ENCODE measurements at regions of chr5 and their contacts with region 1.

Region 1: DNA sequence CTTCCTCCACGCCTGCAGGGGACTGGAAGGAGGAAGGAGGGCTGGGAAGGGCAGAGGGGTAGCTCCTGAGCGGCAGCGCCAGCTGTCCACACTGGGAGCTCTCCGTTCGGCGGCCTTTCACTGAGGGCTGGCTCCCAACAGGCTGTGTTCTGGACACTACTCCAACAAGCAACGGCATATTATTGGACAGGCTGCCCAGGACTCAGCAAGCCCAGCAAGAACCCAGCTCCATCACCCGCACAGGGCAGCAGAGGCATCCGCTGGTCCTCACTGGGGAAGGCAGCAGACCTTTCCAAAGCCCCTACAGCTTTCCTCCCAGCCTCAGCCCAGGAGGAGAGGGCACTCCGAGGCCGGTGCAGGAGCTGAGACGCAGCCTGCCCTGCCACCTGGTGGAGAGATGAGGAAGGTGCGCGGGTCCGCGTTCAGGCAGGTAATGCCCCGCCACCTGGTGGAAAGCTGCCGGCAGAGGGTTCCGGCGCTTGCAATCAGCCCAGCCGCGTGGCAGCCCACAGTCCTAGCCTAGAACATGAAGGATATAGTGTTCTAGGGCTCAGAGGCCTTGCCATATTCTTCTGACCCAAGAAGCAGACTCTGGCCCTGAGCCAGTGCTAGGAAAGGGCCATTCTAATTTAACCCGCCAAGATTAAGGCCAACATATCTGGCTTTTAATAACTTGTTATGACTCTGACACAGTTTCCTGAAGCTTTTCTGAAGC is 74.4 kb downstream of the NRG2 start:
- DNase-seq: peak; percentile 97
- ATAC-seq: peak; percentile 98
- H3K4me3 Mint-ChIP-seq: no peak overlapping the region
- H3K27ac Mint-ChIP-seq: no peak overlapping the region
- H3K4me1 Mint-ChIP-seq: no peaks in the 10 kb centered on the region
- H3K27me3 Mint-ChIP-seq: peaks cover 15% of the 10 kb centered on the region
- CTCF ChIP-seq: peak; percentile 98

Region 2: DNA sequence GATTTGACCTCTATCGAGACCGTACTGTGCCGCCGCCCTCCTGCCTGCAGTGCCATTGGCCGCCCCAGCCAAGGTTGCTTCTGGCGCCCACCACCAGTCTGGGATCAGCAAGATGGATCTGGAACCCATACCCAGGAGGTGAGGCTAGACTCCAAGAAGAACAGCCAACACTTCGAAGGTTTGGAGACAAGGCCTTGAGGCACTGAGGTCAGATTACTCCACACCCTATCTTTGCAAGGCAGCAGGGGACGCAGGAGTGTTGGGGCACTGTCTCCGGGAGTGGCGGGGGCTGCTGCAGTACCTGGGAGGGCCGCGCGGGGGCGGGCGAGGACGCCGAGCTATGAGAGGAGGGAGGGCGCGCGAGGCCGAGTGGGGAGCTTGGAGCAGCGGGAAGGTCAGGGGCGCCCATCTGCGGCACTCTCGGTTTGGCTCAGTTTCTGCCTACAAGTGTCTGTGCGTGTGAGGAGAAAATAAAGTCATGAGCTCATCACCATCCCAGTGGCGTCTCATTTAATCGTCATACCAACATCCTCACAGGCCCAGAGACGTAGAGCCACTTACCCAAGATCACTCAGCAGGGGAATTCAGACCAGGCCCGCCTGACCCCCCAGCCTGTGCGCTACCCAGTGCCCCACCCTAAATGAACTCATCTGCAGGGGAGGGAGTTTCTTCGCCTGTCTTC is 193.6 kb before region 1 on chr5:
- CTCF ChIA-PET with region 1: interaction called, 61 read pairs
- POLR2A ChIA-PET with region 1: no interaction called
- DNase-seq: peak; percentile 97
- ATAC-seq: peak; percentile 97
- H3K4me3 Mint-ChIP-seq: peak overlapping the region; percentile 34; the same call in 1 of the 2 replicates
- H3K27ac Mint-ChIP-seq: no peak overlapping the region
- H3K4me1 Mint-ChIP-seq: peaks cover 11% of the 10 kb centered on the region; the same call in 1 of the 2 replicates
- H3K27me3 Mint-ChIP-seq: peaks cover 28% of the 10 kb centered on the region
- CTCF ChIP-seq: peak; percentile 98

Region 3: GRCh38 chr5:139837631-139838422 is 130.9 kb before region 1 on chr5:
- CTCF ChIA-PET with region 1: interaction called, 55 read pairs
- POLR2A ChIA-PET with region 1: no interaction called
- DNase-seq: no peak
- ATAC-seq: no peak
- H3K4me3 Mint-ChIP-seq: no peak overlapping the region
- H3K27ac Mint-ChIP-seq: no peak overlapping the region
- H3K4me1 Mint-ChIP-seq: no peaks in the 10 kb centered on the region
- H3K27me3 Mint-ChIP-seq: peaks cover 17% of the 10 kb centered on the region
- CTCF ChIP-seq: no peak

Region 4: GRCh38 chr5:139872052-139872766 is 96.5 kb before region 1 on chr5:
- CTCF ChIA-PET with region 1: interaction called, 113 read pairs
- POLR2A ChIA-PET with region 1: interaction called, 4 read pairs
- DNase-seq: peak; percentile 45
- ATAC-seq: peak; percentile 73
- H3K4me3 Mint-ChIP-seq: no peak overlapping the region
- H3K27ac Mint-ChIP-seq: no peak overlapping the region
- H3K4me1 Mint-ChIP-seq: peaks cover 19% of the 10 kb centered on the region
- H3K27me3 Mint-ChIP-seq: no peaks in the 10 kb centered on the region; the same call in 1 of the 2 replicates
- CTCF ChIP-seq: 0 out of 2 replicates have a peak, but pooled peaks have one; percentile 24

Region 5: GRCh38 chr5:139903795-139904565 is 64.7 kb before region 1 on chr5:
- CTCF ChIA-PET with region 1: interaction called, 83 read pairs
- POLR2A ChIA-PET with region 1: no interaction called
- DNase-seq: peak; percentile 67
- ATAC-seq: peak; percentile 50
- H3K4me3 Mint-ChIP-seq: peak overlapping the region; percentile 71
- H3K27ac Mint-ChIP-seq: no peak overlapping the region
- H3K4me1 Mint-ChIP-seq: peaks cover 12% of the 10 kb centered on the region
- H3K27me3 Mint-ChIP-seq: peaks cover 49% of the 10 kb centered on the region
- CTCF ChIP-seq: no peak

Region 6: GRCh38 chr5:139949710-139950109 is 19.0 kb before region 1 on chr5:
- CTCF ChIA-PET with region 1: interaction called, 95 read pairs
- POLR2A ChIA-PET with region 1: no interaction called
- DNase-seq: no peak
- ATAC-seq: peak; percentile 38; the same call in 1 of the 2 replicates
- H3K4me3 Mint-ChIP-seq: no peak overlapping the region
- H3K27ac Mint-ChIP-seq: no peak overlapping the region
- H3K4me1 Mint-ChIP-seq: peaks cover 21% of the 10 kb centered on the region
- H3K27me3 Mint-ChIP-seq: peaks cover 9% of the 10 kb centered on the region
- CTCF ChIP-seq: no peak

Region 7: DNA sequence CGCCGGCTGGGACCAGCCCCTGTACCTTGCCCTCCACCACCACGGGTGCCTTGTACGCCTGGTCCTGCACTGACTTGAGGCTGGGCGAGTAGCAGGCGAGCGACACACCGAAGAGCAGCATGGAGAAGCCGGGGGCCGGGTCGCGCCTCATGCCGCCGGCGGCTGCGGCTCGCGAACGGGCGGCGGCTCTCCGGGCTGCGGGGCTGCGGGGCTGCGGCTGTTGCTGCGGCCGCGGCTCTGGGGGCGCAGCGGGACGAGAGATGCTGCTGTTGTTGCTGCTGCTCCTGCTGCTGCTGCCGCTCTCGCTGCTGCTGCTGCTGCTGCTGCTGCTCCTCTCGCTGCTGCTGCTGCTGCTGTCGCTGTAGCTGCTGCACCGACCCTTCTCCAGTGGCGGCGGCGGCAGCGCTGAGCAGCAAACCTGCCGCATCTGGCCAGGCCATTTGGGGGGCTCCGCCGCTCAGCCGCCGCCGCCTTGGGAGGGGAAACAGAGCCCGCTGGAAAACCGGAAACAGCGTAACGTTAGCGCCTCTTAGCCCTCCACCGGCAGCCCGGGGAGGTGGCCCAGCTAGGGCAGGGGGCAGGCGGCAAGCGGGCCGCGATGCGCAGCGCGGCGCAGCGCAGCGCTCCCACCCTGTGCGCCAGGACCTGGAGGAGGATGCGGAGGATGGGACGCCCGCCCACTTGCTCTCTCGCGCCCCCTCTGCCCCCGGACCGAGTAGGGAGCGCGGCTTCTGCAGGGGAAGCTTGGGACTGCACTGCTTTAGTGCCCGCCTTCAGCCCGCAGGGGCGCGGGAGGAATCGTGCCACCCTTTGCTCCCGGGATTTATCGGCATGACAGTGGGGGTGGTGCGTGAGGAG is 74.2 kb after region 1 on chr5 and contains the start of gene NRG2:
- CTCF ChIA-PET with region 1: interaction called, 24 read pairs
- POLR2A ChIA-PET with region 1: no interaction called
- DNase-seq: peak; percentile 88
- ATAC-seq: peak; percentile 89
- H3K4me3 Mint-ChIP-seq: peak within 1 kb of the TSS; percentile 70
- H3K27ac Mint-ChIP-seq: no peak within 1 kb of the TSS
- H3K4me1 Mint-ChIP-seq: peaks cover 28% of the 10 kb centered on the region
- H3K27me3 Mint-ChIP-seq: peaks cover 86% of the 10 kb centered on the region
- CTCF ChIP-seq: no peak
- total RNA-seq, gene NRG2: 0.44 to 0.73 TPM (median 0.46 TPM) in 3 replicates